OCI-LY7 (cell line): ENCODE measurements at regions of chr11 and their contacts with region 1.

Region 1: DNA sequence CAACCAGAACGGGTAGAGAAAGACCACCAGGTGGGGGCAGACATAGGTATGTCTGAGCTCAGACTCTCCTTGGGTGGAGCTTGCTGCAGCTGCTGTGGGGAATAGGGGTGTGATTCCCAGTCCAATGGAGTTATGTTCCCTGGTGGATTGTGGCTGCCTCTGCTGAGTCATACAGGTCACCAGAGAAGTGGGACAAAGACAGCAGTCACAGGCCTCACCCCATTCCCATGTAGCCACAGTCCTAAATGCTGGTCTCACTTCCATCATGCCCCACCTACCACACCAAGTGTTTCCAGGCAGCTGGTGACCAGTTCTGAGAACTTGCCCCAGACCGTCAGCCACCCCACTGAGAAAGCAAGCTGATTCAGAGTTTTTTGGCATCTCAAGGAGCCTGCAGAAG is 17.5 kb downstream of the OR52E5 start:
- DNase-seq: no peak
- H3K4me3 ChIP-seq: no peak overlapping the region
- H3K27ac ChIP-seq: no peak overlapping the region
- H3K4me1 ChIP-seq: no peaks in the 10 kb centered on the region
- CTCF ChIP-seq: no peak

Region 2: DNA sequence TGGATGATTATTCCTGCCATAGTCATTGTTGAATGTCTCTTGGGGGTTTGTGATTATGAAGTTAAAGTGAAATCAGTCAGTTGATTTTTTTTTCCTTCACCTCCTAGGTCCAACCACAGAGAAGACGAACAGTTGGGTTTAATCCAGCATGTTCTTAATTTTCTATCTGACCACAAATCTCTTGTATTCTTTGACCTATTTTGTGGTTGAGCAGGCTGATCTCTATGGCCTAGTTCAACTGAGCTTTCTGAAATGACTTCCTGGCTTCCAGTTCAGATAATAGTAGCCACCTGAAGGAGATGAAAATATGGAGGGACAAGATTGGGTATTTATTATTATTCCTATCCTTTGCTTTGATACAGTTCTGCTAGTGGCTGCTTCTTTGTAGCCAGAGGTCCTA is 63.0 kb after region 1 on chr11:
- CTCF ChIA-PET with region 1: no interaction called
- POLR2A ChIA-PET with region 1: no interaction called
- intact Hi-C with region 1: loop called (anchors 10 kb)
- DNase-seq: no peak
- H3K4me3 ChIP-seq: no peak overlapping the region
- H3K27ac ChIP-seq: no peak overlapping the region
- H3K4me1 ChIP-seq: no peaks in the 10 kb centered on the region
- CTCF ChIP-seq: no peak